GM10248 (cell line): ENCODE measurements at regions of chr4 and their contacts with region 1.

Region 1: DNA sequence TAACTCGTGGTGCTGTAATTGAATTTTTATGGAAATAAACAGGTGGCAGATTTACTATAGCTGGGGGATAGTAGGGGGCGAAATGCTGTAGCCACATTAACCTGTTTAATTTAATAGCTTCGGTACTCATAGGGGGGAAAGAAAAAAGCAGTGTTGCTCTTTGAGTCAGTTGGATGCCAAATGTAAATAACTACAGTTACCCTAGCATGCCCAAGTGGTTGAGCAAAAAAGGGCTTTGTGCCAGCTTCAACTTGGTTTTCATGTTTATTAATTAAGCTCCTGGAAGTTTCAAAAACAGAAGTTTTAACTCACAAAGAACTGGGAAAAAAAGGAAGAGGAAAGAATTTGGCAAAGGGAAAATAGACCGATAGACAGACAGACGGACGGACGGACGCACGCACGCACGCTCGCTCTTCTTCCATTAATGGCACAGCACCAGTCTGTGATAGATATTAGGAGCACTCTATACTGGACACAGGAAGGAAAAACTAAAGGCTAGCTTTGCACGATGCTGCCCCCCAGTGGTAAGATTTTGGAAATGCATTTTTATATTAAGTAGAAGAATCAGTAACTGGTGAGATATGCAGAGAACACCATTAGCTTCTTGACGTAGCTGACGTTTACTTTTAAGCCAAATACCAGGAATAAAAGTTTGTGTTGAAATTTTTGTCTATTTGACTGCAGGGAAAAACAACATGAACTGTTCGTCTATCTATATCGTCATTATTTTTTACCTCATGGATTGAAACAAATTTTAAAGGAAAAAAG is 151.8 kb downstream of the SLC7A11 start:
- DNase-seq: peak; percentile 75
- CTCF ChIP-seq: peak; percentile 77

Region 2: DNA sequence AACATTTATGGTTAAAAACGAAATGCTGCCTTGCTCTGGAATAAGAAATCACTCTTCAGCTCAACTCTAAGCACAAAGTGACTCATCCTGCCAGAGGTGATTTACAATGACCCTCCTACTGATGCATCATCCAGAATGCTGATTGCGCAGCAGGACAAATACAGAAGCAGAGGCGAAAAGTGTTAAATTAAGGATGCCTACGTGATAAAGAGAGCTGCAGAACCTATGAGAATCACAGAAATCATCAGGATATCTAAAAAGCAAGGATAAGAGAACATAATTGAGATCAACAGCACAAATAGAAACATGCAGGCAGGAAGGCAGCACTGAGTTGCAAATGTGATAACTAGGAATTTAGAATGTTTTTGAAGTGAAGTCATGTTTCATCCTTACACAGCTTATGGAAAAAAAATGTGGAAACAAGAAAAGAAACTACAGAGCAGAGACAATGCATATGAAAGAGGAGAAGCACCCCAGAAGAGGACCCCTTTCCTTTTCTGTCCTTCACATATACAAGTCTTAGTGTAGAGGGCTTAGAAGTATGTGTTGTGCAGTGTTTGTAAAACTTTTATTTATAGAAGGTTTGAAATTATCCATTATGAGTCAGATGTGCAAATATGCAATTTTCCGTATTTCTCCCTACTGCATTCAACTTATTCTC is 36.6 kb before region 1 on chr4:
- CTCF ChIA-PET with region 1: interaction called, 16 read pairs
- POLR2A ChIA-PET with region 1: no interaction called
- DNase-seq: no peak
- CTCF ChIP-seq: no peak

Region 3: DNA sequence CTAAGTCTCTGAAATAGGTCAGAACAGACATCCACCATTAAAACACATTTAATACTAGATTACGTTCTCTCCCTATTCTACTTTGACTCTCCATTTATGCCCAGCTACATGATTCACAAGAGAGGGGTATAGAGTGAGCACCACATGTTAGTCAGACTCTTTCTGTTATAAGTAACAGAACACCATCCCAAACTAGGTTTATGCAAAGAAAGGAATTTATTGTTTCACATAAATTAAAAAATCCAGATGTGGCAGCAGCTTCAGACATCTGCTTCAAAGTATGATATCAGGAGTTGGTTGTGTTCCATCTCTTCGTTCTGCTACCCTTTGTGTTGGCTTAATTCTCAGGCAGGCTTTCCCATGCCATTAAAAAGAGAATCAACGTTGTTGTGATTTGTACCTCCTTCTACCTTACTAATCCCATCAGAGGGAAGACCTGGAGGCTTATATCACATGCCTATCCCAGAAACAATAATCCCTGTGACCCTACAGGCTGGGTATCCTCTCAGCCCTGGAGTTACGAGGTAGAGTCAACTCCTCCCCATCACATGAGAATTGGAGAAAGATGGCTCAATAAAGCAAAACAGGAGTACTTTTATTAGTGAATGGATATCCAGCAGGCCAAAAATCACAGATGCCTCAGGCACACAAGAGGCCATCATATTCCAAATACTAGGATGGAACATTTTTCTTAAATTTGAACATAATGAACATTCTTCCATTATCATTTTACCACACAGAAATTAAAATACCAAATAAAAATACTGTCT is 11.4 kb before region 1 on chr4:
- CTCF ChIA-PET with region 1: interaction called, 38 read pairs
- POLR2A ChIA-PET with region 1: no interaction called
- DNase-seq: no peak
- CTCF ChIP-seq: no peak

Region 4: DNA sequence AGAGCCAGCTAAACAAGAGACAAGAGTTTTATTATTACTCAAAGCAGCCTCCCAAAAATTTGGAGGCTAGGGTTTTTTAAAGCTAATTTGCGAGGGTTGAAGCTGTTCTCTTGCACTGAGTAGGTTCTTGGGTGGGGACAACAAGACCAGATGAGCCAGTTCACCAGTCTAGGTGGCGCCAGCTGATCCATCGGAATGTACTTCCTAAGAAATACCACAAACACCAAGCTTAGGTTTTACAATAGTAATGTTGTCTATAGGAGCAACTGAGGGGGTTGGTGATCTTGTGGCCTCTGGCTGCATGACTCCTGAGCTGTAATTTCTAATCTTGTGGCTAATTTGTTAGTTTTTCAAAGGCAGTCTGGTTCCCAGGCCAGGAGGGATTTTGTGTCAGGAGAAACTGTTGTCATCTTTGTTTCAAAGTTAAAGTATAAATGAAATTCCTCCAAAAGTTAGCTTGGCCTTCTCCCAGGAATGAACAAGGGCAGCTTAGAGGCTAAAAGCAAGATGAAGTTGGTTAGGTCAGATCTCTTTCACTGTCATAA is 21.2 kb after region 1 on chr4:
- CTCF ChIA-PET with region 1: interaction called, 17 read pairs
- POLR2A ChIA-PET with region 1: no interaction called
- DNase-seq: no peak
- CTCF ChIP-seq: no peak

Region 5: DNA sequence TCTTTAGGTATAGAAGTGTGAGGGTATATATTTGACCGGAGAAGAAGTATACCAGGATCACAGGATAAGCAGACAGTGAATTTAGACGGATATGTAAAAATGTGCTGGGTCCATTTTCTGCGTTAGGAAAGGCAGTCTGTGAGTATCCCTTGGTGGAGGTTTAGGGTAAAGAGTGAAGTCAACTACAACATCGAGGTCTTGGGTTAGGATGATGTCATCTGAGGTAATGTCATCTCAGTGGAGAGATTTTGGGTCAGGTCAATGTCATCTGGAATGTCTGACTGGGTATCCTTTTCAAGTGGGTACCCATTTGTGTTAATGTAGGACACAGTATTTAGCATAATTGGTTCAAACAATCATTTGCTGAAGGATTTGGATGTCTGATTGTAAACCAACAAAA is 34.1 kb after region 1 on chr4:
- CTCF ChIA-PET with region 1: no interaction called
- POLR2A ChIA-PET with region 1: no interaction called
- DNase-seq: no peak
- CTCF ChIP-seq: no peak

Region 6: GRCh38 chr4:138680989-138681604 is 590.8 kb after region 1 on chr4:
- CTCF ChIA-PET with region 1: interaction called, 16 read pairs
- POLR2A ChIA-PET with region 1: no interaction called
- DNase-seq: peak; percentile 58
- CTCF ChIP-seq: peak; percentile 85